ENCODE measurements at regions of chr2 and their contacts with region 1.

Region 1: DNA sequence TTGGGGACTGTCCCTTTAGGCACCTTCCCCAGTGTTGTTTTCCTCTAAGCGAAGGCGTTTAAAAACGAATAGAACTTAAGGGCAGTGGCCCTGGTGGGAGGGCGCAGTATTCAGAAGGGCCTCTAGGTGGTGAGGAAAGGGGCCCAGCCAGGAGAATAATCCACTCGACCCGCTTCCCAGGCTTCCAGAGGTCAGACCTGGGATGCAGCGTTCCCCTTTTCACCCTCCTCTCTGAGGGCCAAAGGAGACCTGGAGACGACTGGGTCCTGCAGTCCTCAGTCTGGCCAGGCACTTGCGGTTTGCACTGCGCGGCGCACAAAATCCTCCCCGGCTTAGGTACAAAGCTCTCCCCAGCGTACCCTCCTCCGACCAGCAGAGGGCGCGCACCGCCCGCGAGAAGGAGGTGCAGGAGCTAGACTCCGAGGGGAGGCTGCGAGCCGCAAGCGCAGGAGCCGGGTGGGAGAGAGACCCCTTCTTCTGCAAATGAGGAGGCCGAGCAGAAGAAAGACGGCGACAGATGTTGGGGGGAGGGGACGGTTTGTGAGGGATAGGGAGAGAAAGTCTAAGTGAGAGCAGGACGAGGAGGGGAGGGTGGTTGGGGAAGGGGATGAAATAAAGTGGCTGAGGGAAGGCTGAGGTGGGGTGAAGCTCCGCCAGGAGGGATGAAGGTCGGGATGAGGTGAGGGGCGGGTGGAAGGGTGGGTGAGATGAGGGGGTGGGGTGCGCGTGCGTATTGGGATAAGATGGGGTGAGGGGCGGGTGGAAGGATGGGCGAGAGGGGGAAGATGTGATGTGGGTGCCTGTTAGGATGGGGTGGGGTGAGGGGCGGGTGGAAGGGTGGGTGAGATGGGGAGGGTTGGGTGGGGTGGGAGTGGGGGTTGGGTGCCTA is 4.9 kb downstream of the FEV start:
- DNase-seq: peak; percentile 86
- CTCF ChIP-seq: peak; percentile 98

Region 2: GRCh38 chr2:218898109-218898878 is 81.8 kb before region 1 on chr2:
- CTCF ChIA-PET with region 1: interaction called, 16 read pairs
- POLR2A ChIA-PET with region 1: no interaction called
- DNase-seq: peak; percentile 85
- CTCF ChIP-seq: peak; percentile 99

Region 3: DNA sequence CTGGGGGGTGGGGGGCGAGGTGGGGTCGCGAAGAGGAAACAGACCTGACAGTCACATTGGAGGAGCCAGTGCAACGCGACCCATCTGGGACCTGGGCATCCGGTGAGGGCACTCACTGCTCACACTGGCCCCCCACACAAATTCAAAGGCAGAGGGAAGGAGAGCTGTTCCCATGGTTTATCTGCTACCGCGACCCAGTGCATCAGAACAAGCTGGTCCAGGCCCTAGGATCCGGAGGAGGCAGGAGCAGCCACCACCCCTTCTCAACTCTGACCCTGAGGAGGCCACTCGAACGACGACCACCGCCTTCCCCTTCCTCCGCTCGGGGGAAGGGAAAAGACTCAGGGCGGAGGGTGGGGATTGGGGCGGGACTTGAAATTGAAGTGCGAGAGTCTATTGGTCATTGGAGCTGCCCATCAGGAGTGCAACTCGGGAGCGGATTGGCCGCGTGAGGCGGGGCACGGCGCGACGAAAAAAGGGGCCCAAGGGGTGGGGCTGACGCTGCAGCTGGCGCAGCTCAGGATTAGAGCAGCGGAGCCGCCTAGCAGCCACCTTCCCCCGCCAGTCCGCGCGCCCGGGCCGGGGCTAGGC is 20.9 kb before region 1 on chr2 and contains the start of gene CDK5R2:
- CTCF ChIA-PET with region 1: interaction called, 92 read pairs
- POLR2A ChIA-PET with region 1: no interaction called
- DNase-seq: peak; percentile 99
- CTCF ChIP-seq: no peak

Region 4: GRCh38 chr2:218995972-218996711 is 16.1 kb after region 1 on chr2:
- CTCF ChIA-PET with region 1: interaction called, 60 read pairs
- POLR2A ChIA-PET with region 1: no interaction called
- DNase-seq: peak; percentile 88
- CTCF ChIP-seq: peak; percentile 92

Region 5: GRCh38 chr2:219002395-219003266 is 22.5 kb after region 1 on chr2:
- CTCF ChIA-PET with region 1: interaction called, 30 read pairs
- POLR2A ChIA-PET with region 1: no interaction called
- DNase-seq: peak; percentile 72
- CTCF ChIP-seq: peak; percentile 57

Region 6: DNA sequence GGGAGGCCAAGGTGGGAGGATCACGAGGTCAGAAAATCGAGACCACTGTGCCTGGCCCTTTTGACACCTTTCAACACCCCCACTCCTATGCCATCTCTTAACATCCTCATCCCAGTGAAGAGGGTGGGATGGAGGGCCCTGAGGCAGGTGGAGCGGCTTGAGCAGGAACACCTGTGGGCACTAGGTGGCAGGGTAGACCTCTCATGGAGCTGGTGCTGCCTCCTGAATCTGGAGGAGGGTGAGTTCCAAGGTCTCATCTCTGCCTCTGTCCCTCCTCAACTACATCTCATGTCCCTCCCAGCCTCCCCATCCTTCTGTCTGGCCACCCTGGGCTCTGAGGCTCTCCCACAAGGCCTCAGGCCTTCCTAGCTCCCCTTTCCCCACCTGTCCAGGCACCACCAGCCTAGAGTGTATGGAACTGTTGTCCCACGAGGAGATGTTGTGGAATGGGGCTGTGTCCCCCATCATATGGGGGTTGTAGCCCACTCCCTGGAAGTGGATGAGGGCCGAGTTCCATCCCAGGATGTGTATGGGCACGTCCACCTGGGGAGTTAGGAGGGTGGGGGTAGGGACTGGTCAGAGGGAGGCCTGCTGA is 30.2 kb after region 1 on chr2:
- CTCF ChIA-PET with region 1: interaction called, 30 read pairs
- POLR2A ChIA-PET with region 1: no interaction called
- DNase-seq: peak; percentile 69
- CTCF ChIP-seq: peak; percentile 56